ENCODE measurements at regions of chr12 and their contacts with region 1.

Region 1: GRCh38 chr12:58346032-58346632 is 404.8 kb downstream of the ATP23 start:
- DNase-seq: peak in 4 of 5 donors; percentile 16 to 37 (median 22)
- H3K4me3 ChIP-seq: no peak overlapping the region
- H3K4me3 Mint-ChIP-seq: no peak overlapping the region
- H3K27ac ChIP-seq: no peak overlapping the region
- H3K27ac Mint-ChIP-seq: no peak overlapping the region
- H3K4me1 ChIP-seq: no peaks in the 10 kb centered on the region
- H3K4me1 Mint-ChIP-seq: no peaks in the 10 kb centered on the region
- H3K27me3 ChIP-seq: no peaks in the 10 kb centered on the region
- H3K27me3 Mint-ChIP-seq: peaks cover 9 to 16% of the 10 kb centered on the region in 2 donors

Region 2: GRCh38 chr12:56688129-56688845 is 1657.8 kb before region 1 on chr12 and contains the start of gene PTGES3:
- CTCF ChIA-PET with region 1: no interaction called
- POLR2A ChIA-PET with region 1: no interaction called
- intact Hi-C with region 1: no loop called
- DNase-seq: peak; percentile 97 to 98 (median 98)
- H3K4me3 ChIP-seq: peak within 1 kb of the TSS; percentile 83 to 99
- H3K4me3 Mint-ChIP-seq: peak within 1 kb of the TSS; percentile 99 to 100 (median 100)
- H3K27ac ChIP-seq: peak within 1 kb of the TSS; percentile 99
- H3K27ac Mint-ChIP-seq: peak within 1 kb of the TSS; percentile 96 to 100 (median 100)
- H3K4me1 ChIP-seq: peaks cover 36% of the 10 kb centered on the region
- H3K4me1 Mint-ChIP-seq: peaks cover 16 to 51% (median 25%) of the 10 kb centered on the region in 4 donors
- H3K27me3 ChIP-seq: no peaks in the 10 kb centered on the region
- H3K27me3 Mint-ChIP-seq: no peaks in the 10 kb centered on the region
- total RNA-seq, gene PTGES3: 191 to 195 TPM

Region 3: DNA sequence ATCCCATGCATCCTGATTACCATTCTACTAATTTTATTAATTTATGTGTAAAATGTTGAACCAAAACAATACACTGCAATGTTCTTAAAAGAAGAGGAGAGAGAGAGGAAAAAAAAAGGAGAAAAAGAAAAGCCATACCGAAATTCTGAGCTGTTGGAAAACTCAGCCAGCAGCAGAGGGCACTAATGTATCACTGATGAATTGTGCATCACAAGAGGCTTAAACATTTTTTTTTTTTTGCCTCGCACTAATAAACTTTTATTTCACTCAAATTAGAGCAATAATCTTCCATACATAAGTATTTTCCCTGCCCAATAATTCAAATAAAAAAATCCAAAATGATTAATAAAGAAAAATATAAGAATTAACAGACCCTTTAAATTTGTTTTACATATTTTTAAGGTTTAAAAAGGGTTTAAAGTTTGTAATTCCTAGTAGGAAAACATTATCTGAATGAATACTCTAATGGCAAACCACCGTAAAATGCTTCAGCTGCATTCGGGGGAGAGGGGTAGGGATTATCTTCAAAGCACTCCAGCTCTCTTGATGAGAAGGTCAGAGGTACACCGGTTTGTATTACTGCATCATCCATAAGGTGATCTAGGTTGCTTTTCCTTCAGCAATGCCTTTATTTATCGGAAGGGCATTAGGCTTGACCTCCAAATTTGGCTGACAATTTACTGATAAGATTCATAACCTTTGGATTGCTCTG is 362.8 kb before region 1 on chr12:
- CTCF ChIA-PET with region 1: no interaction called
- POLR2A ChIA-PET with region 1: no interaction called
- intact Hi-C with region 1: loop called (anchors 5 kb)
- DNase-seq: peak in 3 of 5 donors; percentile 1 to 11 (median 4)
- H3K4me3 ChIP-seq: no peak overlapping the region
- H3K4me3 Mint-ChIP-seq: no peak overlapping the region
- H3K27ac ChIP-seq: no peak overlapping the region
- H3K27ac Mint-ChIP-seq: no peak overlapping the region
- H3K4me1 ChIP-seq: no peaks in the 10 kb centered on the region
- H3K4me1 Mint-ChIP-seq: no peaks in the 10 kb centered on the region
- H3K27me3 ChIP-seq: no peaks in the 10 kb centered on the region
- H3K27me3 Mint-ChIP-seq: peaks cover 9 to 14% of the 10 kb centered on the region in 2 donors

Region 4: GRCh38 chr12:58443273-58443980 is 97.3 kb after region 1 on chr12:
- CTCF ChIA-PET with region 1: interaction called, 5 read pairs
- POLR2A ChIA-PET with region 1: no interaction called
- intact Hi-C with region 1: loop called (anchors 1 kb)
- DNase-seq: peak in 2 of 5 donors; percentile 5 to 11
- H3K4me3 ChIP-seq: no peak overlapping the region
- H3K4me3 Mint-ChIP-seq: no peak overlapping the region
- H3K27ac ChIP-seq: no peak overlapping the region
- H3K27ac Mint-ChIP-seq: no peak overlapping the region
- H3K4me1 ChIP-seq: no peaks in the 10 kb centered on the region
- H3K4me1 Mint-ChIP-seq: no peaks in the 10 kb centered on the region
- H3K27me3 ChIP-seq: no peaks in the 10 kb centered on the region
- H3K27me3 Mint-ChIP-seq: peaks cover 0 to 1% of the 10 kb centered on the region in 2 donors